WTC11 (cell line): ENCODE measurements at regions of chr3 and their contacts with region 1.

Region 1: GRCh38 chr3:187669675-187670504 is at the start of gene SST:
- DNase-seq: peak; percentile 90
- ATAC-seq: peak; percentile 96
- H3K4me3 Mint-ChIP-seq: peak within 1 kb of the TSS; percentile 59
- H3K27ac Mint-ChIP-seq: no peak within 1 kb of the TSS
- H3K4me1 Mint-ChIP-seq: peaks cover 11% of the 10 kb centered on the region
- H3K27me3 Mint-ChIP-seq: peaks cover 81% of the 10 kb centered on the region
- CTCF ChIP-seq: no peak
- total RNA-seq, gene SST: 0.32 to 0.70 TPM in 2 of 3 replicates, not detected in the other

Region 2: DNA sequence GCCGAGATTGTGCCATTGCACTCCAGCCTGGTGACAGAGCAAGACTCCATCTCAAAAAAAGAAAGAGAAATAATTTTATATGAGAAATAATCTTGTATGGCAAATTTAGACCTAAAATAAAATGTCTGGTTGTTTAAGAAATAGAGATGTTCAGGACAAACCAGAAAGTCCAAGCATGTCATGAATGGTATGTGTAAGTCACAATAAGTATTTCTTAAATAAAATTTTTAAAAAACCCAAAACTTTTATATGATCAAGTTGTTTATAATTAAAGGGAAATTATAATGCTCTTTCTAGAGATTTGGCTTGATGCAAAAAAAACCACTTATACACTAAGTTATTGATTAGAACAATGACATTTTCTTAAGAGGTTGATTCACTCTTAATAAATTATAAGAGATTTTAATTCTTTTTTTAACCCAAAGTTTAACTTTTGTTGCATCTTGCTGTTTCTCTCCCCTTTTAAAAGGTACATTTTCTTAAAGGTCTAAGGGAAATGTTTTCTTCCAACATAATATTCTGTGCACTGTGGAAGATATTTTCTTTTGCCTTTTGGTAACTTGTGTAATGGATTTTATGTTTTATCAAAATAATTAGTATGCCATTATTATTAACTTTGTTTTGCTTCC is 196.0 kb before region 1 on chr3:
- CTCF ChIA-PET with region 1: no interaction called
- POLR2A ChIA-PET with region 1: no interaction called
- DNase-seq: no peak
- ATAC-seq: no peak
- H3K4me3 Mint-ChIP-seq: no peak overlapping the region
- H3K27ac Mint-ChIP-seq: no peak overlapping the region
- H3K4me1 Mint-ChIP-seq: 0 out of 2 replicates have a peak, but pooled peaks cover 3% of the 10 kb centered on the region
- H3K27me3 Mint-ChIP-seq: peaks cover 22% of the 10 kb centered on the region
- CTCF ChIP-seq: no peak

Region 3: DNA sequence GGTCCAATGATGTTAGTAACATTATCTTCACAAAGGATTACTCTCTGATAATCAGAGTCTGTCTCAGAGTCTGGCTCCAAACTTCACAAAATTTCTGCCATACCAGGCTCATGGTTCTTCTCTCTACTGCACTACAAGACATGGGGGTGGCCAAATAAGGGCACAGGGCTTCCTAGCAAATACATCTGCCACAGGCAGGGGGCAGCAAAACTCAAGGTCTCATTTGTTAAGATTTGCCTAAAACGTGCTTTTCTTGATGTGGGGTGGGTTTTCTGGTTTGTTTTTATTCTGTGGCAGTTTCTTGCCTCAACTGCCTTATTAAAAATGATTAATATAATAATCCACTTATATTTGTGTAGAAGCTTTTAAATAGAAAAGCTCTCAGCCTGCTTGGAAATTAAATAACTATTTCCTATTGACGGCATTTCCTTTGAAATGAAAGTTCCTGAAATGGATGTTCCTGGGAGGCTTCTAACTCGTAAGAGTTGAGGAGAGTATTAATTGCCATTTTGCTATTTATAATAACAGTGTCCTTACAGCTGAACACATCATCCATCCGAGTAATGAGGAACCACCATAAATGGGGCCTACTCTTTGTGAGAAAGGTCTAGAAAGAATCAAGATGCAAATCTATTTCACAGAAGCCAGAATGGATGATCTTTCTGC is 53.5 kb before region 1 on chr3:
- CTCF ChIA-PET with region 1: interaction called, 10 read pairs
- POLR2A ChIA-PET with region 1: no interaction called
- DNase-seq: peak; percentile 62
- ATAC-seq: peak; percentile 67
- H3K4me3 Mint-ChIP-seq: no peak overlapping the region
- H3K27ac Mint-ChIP-seq: no peak overlapping the region
- H3K4me1 Mint-ChIP-seq: peaks cover 57% of the 10 kb centered on the region
- H3K27me3 Mint-ChIP-seq: peaks cover 96% of the 10 kb centered on the region
- CTCF ChIP-seq: peak; percentile 69